H1 (cell line): ENCODE measurements at regions of chr11 and their contacts with region 1.

Region 1: GRCh38 chr11:36672813-36673450 is 74.9 kb upstream of the RAG2 start:
- DNase-seq: no peak
- H3K4me3 ChIP-seq: no peak overlapping the region
- H3K27ac ChIP-seq: no peak overlapping the region
- H3K4me1 ChIP-seq: no peaks in the 10 kb centered on the region
- H3K27me3 ChIP-seq: no peaks in the 10 kb centered on the region
- CTCF ChIP-seq: peak in 2 of 3 experiments; percentile 20 to 62; a peak in 2 of 4 replicates
- EP300 ChIP-seq: no peak
- POLR2A ChIP-seq: no peak
- RAD21 ChIP-seq: peak; percentile 31 to 32; a peak in 3 of 4 replicates

Region 2: DNA sequence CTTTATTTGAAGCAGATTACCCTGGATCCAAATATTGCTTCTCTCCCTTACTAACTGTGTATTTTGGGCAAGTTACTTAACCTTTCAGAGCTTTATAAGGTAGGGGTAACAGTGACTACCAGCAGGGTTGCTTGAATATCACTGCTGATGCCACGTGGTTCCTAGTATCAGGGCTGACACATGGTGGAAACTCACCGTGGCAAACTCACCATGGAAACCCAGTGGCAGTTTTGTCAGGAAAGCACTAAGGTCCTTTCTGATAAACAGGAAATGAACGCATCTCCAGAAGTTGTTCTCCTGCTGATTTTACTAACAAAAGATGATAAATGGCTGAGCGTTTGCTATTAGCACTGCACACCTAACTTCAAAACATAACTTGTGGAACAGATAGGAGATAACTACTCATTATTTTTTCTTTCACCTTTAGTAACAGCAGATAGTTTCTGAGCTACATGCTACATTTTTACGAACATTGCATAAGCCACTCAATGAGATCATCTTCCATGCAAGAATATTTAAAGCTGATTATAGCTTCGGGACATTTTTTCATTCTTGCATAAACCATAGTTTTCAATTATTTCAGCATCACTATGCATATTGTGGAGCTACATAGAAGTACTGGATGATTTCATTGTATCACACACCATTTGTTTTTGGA is 15.2 kb before region 1 on chr11:
- CTCF ChIA-PET with region 1: interaction called, 15 read pairs
- POLR2A ChIA-PET with region 1: no interaction called
- DNase-seq: no peak
- H3K4me3 ChIP-seq: no peak overlapping the region
- H3K27ac ChIP-seq: no peak overlapping the region
- H3K4me1 ChIP-seq: no peaks in the 10 kb centered on the region
- H3K27me3 ChIP-seq: no peaks in the 10 kb centered on the region
- CTCF ChIP-seq: no peak
- EP300 ChIP-seq: no peak
- POLR2A ChIP-seq: no peak
- RAD21 ChIP-seq: no peak

Region 3: GRCh38 chr11:36684840-36685801 is 12.2 kb after region 1 on chr11:
- CTCF ChIA-PET with region 1: interaction called, 13 read pairs
- POLR2A ChIA-PET with region 1: no interaction called
- DNase-seq: no peak
- H3K4me3 ChIP-seq: no peak overlapping the region
- H3K27ac ChIP-seq: no peak overlapping the region
- H3K4me1 ChIP-seq: no peaks in the 10 kb centered on the region
- H3K27me3 ChIP-seq: no peaks in the 10 kb centered on the region
- CTCF ChIP-seq: no peak
- EP300 ChIP-seq: no peak
- POLR2A ChIP-seq: no peak
- RAD21 ChIP-seq: no peak